ENCODE measurements at regions of chr5 and their contacts with region 1.

Region 1: GRCh38 chr5:178130604-178131485 is at the start of gene RMND5B:
- DNase-seq: peak; percentile 80
- H3K4me3 Mint-ChIP-seq: peak within 1 kb of the TSS; percentile 83
- H3K27ac Mint-ChIP-seq: peak within 1 kb of the TSS; percentile 54
- H3K4me1 Mint-ChIP-seq: peaks cover 11% of the 10 kb centered on the region
- H3K27me3 Mint-ChIP-seq: peaks cover 3% of the 10 kb centered on the region
- total RNA-seq, gene RMND5B: 23.9 and 28.0 TPM in 2 replicates

Region 2: GRCh38 chr5:178113199-178113787 is 17.6 kb before region 1 on chr5 and contains the start of gene N4BP3:
- intact Hi-C with region 1: loop called (anchors 1 kb)
- DNase-seq: peak; percentile 83
- H3K4me3 Mint-ChIP-seq: peak within 1 kb of the TSS; percentile 89
- H3K27ac Mint-ChIP-seq: peak within 1 kb of the TSS; percentile 92
- H3K4me1 Mint-ChIP-seq: peaks cover 37% of the 10 kb centered on the region
- H3K27me3 Mint-ChIP-seq: peaks cover 38% of the 10 kb centered on the region
- total RNA-seq, gene N4BP3: 1.8 TPM in 2 replicates

Region 3: GRCh38 chr5:178146020-178146820 is 15.4 kb after region 1 on chr5:
- intact Hi-C with region 1: no loop called
- DNase-seq: peak; percentile 49
- H3K4me3 Mint-ChIP-seq: no peak overlapping the region
- H3K27ac Mint-ChIP-seq: no peak overlapping the region
- H3K4me1 Mint-ChIP-seq: peaks cover 50% of the 10 kb centered on the region
- H3K27me3 Mint-ChIP-seq: no peaks in the 10 kb centered on the region

Region 4: GRCh38 chr5:178163772-178164735 is 33.2 kb after region 1 on chr5:
- intact Hi-C with region 1: no loop called
- DNase-seq: peak; percentile 84
- H3K4me3 Mint-ChIP-seq: no peak overlapping the region
- H3K27ac Mint-ChIP-seq: no peak overlapping the region
- H3K4me1 Mint-ChIP-seq: no peaks in the 10 kb centered on the region
- H3K27me3 Mint-ChIP-seq: peaks cover 19% of the 10 kb centered on the region

Measured in activated T-helper 1 cell treated with anti-CD3 and anti-CD28 coated beads, Interleukin-12 subunit alpha, Interleukin-12 subunit beta, Interleukin-2, Interleukin-4 antibody, amounts not matched to agents 30 ng/mL and 10 ng/mL and 1 ng/mL, durations not matched to agents 14 hours and 24 hours and 36 hours (primary cell).